ENCODE measurements at regions of chr7 and their contacts with region 1.

Region 1: GRCh38 chr7:3922175-3922635 is 621.2 kb downstream of the SDK1 start:
- DNase-seq: peak; percentile 90
- ATAC-seq: peak; percentile 92
- H3K4me3 ChIP-seq: no peak overlapping the region
- H3K27ac ChIP-seq: peak overlapping the region; percentile 19; the same call in 1 of the 2 replicates
- H3K4me1 ChIP-seq: peaks cover 3% of the 10 kb centered on the region; the same call in 1 of the 2 replicates
- H3K27me3 ChIP-seq: no peaks in the 10 kb centered on the region
- CTCF ChIP-seq: no peak
- POLR2A ChIP-seq: no peak
- RAD21 ChIP-seq: no peak; the same call in 1 of the 2 replicates

Region 2: GRCh38 chr7:3738964-3739363 is 183.2 kb before region 1 on chr7:
- CTCF ChIA-PET with region 1: no interaction called
- POLR2A ChIA-PET with region 1: no interaction called
- dilution Hi-C with region 1: no loop called
- in situ Hi-C with region 1: no loop called
- intact Hi-C with region 1: no loop called
- DNase-seq: no peak
- ATAC-seq: no peak
- H3K4me3 ChIP-seq: no peak overlapping the region
- H3K27ac ChIP-seq: no peak overlapping the region
- H3K4me1 ChIP-seq: no peaks in the 10 kb centered on the region; the same call in 1 of the 2 replicates
- H3K27me3 ChIP-seq: no peaks in the 10 kb centered on the region
- CTCF ChIP-seq: no peak
- POLR2A ChIP-seq: no peak
- RAD21 ChIP-seq: no peak

Region 3: DNA sequence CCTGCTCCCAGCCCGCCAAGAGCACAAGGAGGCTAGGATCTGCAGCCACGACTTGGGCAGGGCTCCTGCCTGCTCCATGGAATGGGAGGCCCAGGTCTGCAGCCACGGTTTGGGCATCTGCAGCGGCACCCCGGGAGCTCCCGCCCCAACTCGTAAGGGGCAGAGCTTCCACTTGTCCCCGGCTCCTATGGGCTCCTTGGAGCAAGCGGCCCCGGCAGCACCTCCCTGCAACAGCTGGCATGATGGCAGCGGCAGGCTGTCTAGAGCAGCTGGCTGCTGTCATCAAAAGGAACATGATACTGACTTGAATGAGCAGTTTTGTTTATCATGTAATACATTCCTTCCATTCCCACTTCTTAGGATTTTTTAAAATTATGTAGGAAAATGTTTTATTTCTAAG is 75.9 kb after region 1 on chr7:
- CTCF ChIA-PET with region 1: no interaction called
- POLR2A ChIA-PET with region 1: no interaction called
- dilution Hi-C with region 1: no loop called
- in situ Hi-C with region 1: no loop called
- intact Hi-C with region 1: no loop called
- DNase-seq: peak; percentile 55
- ATAC-seq: peak; percentile 87
- H3K4me3 ChIP-seq: no peak overlapping the region
- H3K27ac ChIP-seq: peak overlapping the region; percentile 29; the same call in 1 of the 2 replicates
- H3K4me1 ChIP-seq: peaks cover 11% of the 10 kb centered on the region; the same call in 1 of the 2 replicates
- H3K27me3 ChIP-seq: no peaks in the 10 kb centered on the region; the same call in 1 of the 2 replicates
- CTCF ChIP-seq: no peak
- POLR2A ChIP-seq: no peak
- RAD21 ChIP-seq: no peak

Region 4: GRCh38 chr7:4479367-4480039 is 557.3 kb after region 1 on chr7:
- CTCF ChIA-PET with region 1: no interaction called
- POLR2A ChIA-PET with region 1: no interaction called
- dilution Hi-C with region 1: no loop called
- in situ Hi-C with region 1: no loop called
- intact Hi-C with region 1: loop called (anchors 10 kb)
- DNase-seq: peak; percentile 16
- ATAC-seq: peak; percentile 77
- H3K4me3 ChIP-seq: no peak overlapping the region
- H3K27ac ChIP-seq: no peak overlapping the region
- H3K4me1 ChIP-seq: no peaks in the 10 kb centered on the region
- H3K27me3 ChIP-seq: no peaks in the 10 kb centered on the region
- CTCF ChIP-seq: no peak
- POLR2A ChIP-seq: no peak
- RAD21 ChIP-seq: no peak